ENCODE measurements at regions of chr9 and their contacts with region 1.

Region 1: GRCh38 chr9:35489313-35490154 is at the start of gene RUSC2:
- DNase-seq: peak; percentile 76
- H3K4me3 ChIP-seq: peak within 1 kb of the TSS; percentile 55 to 85 (median 70)
- H3K27ac ChIP-seq: peak within 1 kb of the TSS; percentile 89 to 96 (median 91)
- H3K4me1 ChIP-seq: peaks cover 0 to 19% (median 5%) of the 10 kb centered on the region in 4 donors
- H3K27me3 ChIP-seq: no peaks in the 10 kb centered on the region
- CTCF ChIP-seq: peak; percentile 28 to 60 (median 43)
- EP300 ChIP-seq: peak; percentile 24
- POLR2A ChIP-seq: peak; percentile 52
- total RNA-seq, gene RUSC2: 7.0 to 16.8 (median 12.1) TPM

Region 2: GRCh38 chr9:35452481-35452880 is 37.1 kb before region 1 on chr9:
- in situ Hi-C with region 1: no loop called
- intact Hi-C with region 1: no loop called
- DNase-seq: no peak
- H3K4me3 ChIP-seq: no peak overlapping the region
- H3K27ac ChIP-seq: no peak overlapping the region
- H3K4me1 ChIP-seq: no peaks in the 10 kb centered on the region
- H3K27me3 ChIP-seq: no peaks in the 10 kb centered on the region
- CTCF ChIP-seq: no peak
- EP300 ChIP-seq: no peak
- POLR2A ChIP-seq: no peak

Region 3: DNA sequence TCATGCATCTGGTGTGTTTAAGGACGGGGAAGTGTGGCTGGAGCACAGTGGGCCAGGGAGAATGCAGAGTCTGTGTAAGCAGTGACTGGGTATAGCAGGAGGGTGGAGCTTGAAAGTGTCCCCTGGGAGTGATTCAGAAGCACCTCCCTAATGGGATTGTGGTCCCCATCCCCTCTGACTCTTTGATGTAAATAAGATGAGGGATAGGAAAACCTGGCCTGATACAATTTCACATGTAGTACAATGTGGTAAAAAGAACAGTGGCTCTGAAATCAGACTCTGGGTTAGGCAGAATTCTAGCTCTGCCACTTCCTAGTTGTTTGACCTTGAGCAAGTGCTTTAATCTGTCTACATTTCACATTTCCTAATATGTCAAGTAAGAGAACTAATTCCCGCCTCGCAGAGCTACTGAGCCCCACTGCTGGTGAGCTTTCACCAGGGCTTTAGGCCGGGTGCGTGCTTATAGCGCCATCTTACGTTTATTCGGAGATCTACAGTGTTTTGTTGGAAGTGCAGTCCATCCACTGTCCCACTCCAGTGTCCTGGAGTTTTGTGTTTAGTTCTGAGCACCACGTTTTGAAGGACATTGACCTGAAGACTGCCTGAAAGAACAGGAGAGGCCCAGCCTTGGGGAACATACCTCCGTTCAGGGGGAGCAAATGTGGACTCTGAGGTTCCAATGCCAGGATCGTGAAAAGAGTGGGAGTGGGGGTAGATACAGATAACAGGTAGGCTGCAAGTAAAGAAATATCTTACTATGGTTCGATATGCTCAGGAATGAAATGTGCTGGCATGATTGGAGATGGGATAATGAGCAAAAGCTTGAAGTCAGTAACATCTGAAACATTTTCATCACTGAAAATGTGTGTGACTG is 64.4 kb after region 1 on chr9:
- in situ Hi-C with region 1: loop called in 3 of 4 experiments (anchors 10 kb)
- intact Hi-C with region 1: loop called (anchors 1 kb)
- DNase-seq: peak; percentile 64
- H3K4me3 ChIP-seq: no peak overlapping the region
- H3K27ac ChIP-seq: peak overlapping the region; percentile 42 to 79 (median 75)
- H3K4me1 ChIP-seq: peaks cover 0 to 11% (median 7%) of the 10 kb centered on the region in 4 donors
- H3K27me3 ChIP-seq: no peaks in the 10 kb centered on the region
- CTCF ChIP-seq: peak; percentile 69 to 83 (median 74)
- EP300 ChIP-seq: no peak
- POLR2A ChIP-seq: no peak